G401 (cell line): ENCODE measurements at regions of chr9 and their contacts with region 1.

Region 1: DNA sequence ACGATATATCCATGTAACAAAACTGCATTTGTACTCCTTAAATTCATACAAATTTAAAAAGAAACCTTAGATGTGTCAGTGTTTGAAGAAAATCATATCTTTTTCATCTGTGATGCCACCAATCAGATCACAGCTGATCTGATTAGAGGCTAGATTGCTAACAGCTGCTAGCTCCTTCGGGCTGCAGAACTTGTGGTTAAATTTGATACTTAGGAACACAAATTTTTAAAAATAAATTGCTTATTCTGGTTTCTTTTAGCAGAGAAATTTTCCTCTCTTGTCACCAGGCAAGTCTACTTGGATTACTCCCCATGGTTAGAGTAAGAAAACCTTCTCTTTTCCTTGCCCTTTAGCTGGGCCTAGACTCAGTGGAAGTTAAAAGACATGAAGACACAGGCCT is 94.6 kb upstream of the RANBP6 start:
- DNase-seq: no peak

Region 2: GRCh38 chr9:6040077-6040476 is 69.9 kb before region 1 on chr9:
- in situ Hi-C with region 1: no loop called
- DNase-seq: no peak

Region 3: GRCh38 chr9:6068983-6069382 is 41.0 kb before region 1 on chr9:
- in situ Hi-C with region 1: loop called (anchors 10 kb)
- DNase-seq: no peak